Activated CD4-positive, alpha-beta T cell treated with anti-CD3 and anti-CD28 coated beads, Interleukin-2, amount 10 ng/mL, durations not matched to agents 7 days and 5 days (primary cell): ENCODE measurements at regions of chr12 and their contacts with region 1.

Region 1: DNA sequence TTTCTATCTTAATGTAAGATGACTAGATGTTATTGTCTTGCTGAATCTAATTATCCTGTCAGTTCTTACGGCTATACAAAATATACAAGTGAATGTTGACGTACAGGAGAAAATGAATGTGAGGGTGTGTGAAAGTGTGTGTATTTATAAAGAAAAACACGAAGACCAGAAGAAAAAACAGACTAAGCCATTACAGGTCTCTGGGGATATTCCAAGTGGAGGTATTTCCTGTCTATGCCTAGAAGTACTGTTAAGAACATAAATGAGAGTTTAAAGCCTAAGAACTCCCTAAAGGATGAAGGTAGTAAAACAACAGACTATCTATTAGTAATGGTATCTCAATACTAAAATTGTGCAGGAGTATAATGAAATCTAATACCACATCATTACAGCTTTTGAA is 7.6 kb downstream of the MDM1 start:
- DNase-seq: no peak
- H3K4me3 Mint-ChIP-seq: no peak overlapping the region
- H3K27ac Mint-ChIP-seq: no peak overlapping the region
- H3K4me1 Mint-ChIP-seq: peaks cover 16% of the 10 kb centered on the region
- H3K27me3 Mint-ChIP-seq: no peaks in the 10 kb centered on the region

Region 2: DNA sequence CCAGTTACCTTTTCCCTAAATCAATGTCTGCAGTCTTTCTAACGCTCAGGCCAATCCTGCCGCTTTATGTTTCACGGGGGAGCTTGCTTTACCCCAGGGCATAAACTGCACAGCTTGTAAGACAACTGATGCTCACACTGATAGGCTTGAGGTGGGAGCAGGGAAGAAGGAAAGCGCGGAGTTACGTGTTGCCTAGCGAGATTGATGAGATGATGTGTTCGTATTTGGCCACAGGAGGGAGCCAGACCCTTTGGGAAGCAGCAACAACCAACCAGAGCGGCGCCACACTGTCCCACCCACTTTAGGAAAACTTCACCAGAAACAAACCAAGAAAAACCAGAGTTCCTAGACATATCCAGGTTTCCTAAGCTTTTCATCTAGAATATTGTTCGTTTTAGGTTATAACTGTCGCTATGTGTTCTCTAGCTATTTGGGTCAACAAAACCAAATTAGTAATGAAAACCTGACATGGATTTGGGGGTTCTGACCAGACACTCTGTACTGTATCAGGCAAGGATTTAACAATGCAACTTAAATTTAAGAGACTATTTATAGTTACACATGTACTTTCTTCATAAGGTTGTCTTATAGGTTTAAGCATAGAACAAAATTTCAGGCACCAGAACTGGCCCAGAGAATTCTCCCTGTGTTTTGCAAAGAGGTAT is 101.3 kb before region 1 on chr12:
- CTCF ChIA-PET with region 1: interaction called, 12 read pairs
- POLR2A ChIA-PET with region 1: no interaction called
- DNase-seq: peak; percentile 76
- H3K4me3 Mint-ChIP-seq: no peak overlapping the region
- H3K27ac Mint-ChIP-seq: no peak overlapping the region
- H3K4me1 Mint-ChIP-seq: peaks cover 15% of the 10 kb centered on the region
- H3K27me3 Mint-ChIP-seq: peaks cover 13% of the 10 kb centered on the region